K562 (cell line): ENCODE measurements at regions of chr7 and their contacts with region 1.

Region 1: DNA sequence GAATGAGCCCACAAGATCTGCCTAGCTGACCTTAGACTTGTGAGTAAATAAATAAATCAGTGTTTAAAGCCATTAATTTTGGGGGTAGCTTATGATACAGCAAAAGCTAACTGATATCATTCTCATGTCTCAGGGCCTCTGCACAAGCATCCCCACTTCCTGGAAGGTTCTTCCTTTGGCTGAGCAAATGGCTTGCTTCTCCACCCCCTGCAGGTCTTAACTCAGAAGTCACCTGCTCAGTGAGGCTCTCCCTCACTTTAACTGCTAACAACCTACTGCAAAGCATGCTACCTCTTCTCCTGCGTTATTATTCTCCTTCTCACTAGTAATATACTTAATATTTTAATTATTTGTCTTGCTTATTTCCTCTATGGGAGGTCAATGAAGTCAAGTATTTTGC is 167.3 kb downstream of the TPK1 start:
- DNase-seq: no peak
- ATAC-seq: no peak
- H3K4me3 ChIP-seq: no peak overlapping the region
- H3K27ac ChIP-seq: no peak overlapping the region
- H3K4me1 ChIP-seq: no peaks in the 10 kb centered on the region
- H3K27me3 ChIP-seq: no peaks in the 10 kb centered on the region
- CTCF ChIP-seq: no peak
- EP300 ChIP-seq: no peak
- POLR2A ChIP-seq: no peak
- RAD21 ChIP-seq: no peak

Region 2: DNA sequence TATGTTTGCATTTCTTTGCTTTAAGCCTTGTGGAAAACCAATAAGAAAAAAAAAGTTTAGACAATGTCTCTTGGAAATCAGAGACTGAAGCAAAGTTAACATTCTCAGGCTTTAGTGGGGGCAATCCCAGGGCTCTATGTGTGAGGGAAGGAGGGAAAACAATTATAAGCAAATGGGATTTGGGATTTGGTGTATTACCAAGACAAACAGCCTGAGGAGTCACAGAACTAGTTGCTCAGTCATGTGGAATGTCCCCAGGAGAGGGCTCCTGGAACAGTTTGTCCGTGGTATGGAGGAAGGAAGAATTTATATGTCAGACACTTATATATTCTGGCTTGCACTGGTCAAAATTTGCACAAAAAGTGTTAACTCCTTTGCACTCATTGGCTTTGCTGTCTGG is 730.3 kb after region 1 on chr7:
- CTCF ChIA-PET with region 1: no interaction called
- POLR2A ChIA-PET with region 1: no interaction called
- in situ Hi-C with region 1: no loop called
- intact Hi-C with region 1: no loop called
- DNase-seq: no peak
- ATAC-seq: no peak
- H3K4me3 ChIP-seq: no peak overlapping the region
- H3K27ac ChIP-seq: no peak overlapping the region
- H3K4me1 ChIP-seq: no peaks in the 10 kb centered on the region
- H3K27me3 ChIP-seq: no peaks in the 10 kb centered on the region
- CTCF ChIP-seq: no peak
- EP300 ChIP-seq: no peak
- POLR2A ChIP-seq: no peak
- RAD21 ChIP-seq: no peak

Region 3: DNA sequence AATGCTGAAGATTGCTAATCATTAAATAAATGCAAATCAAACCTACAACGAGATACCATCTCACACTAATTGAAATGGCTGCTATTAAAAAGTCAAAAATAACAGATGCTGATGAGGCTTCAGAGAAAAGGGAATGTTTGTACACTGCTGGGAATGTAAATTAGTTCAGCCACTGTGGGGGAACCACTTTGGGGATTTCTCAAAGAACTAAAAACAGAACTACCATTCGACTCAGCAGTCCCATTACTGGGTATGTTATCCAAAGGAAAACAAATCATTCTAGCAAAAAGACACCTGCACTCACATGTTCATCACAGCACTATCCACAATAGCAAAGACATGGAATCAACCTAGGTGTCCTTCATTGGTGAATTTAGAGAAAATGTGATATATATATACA is 1069.1 kb after region 1 on chr7:
- CTCF ChIA-PET with region 1: no interaction called
- POLR2A ChIA-PET with region 1: no interaction called
- in situ Hi-C with region 1: no loop called
- intact Hi-C with region 1: no loop called
- DNase-seq: no peak
- ATAC-seq: no peak
- H3K4me3 ChIP-seq: no peak overlapping the region
- H3K27ac ChIP-seq: no peak overlapping the region
- H3K4me1 ChIP-seq: no peaks in the 10 kb centered on the region
- H3K27me3 ChIP-seq: no peaks in the 10 kb centered on the region
- CTCF ChIP-seq: no peak
- EP300 ChIP-seq: no peak
- POLR2A ChIP-seq: no peak
- RAD21 ChIP-seq: no peak

Region 4: GRCh38 chr7:145978769-145979168 is 1310.3 kb after region 1 on chr7:
- CTCF ChIA-PET with region 1: no interaction called
- POLR2A ChIA-PET with region 1: no interaction called
- in situ Hi-C with region 1: no loop called
- intact Hi-C with region 1: loop called (anchors 10 kb)
- DNase-seq: no peak
- ATAC-seq: no peak
- H3K4me3 ChIP-seq: no peak overlapping the region
- H3K27ac ChIP-seq: no peak overlapping the region
- H3K4me1 ChIP-seq: no peaks in the 10 kb centered on the region
- H3K27me3 ChIP-seq: no peaks in the 10 kb centered on the region
- CTCF ChIP-seq: no peak
- EP300 ChIP-seq: no peak
- POLR2A ChIP-seq: no peak
- RAD21 ChIP-seq: no peak